ENCODE measurements at regions of chr4 and their contacts with region 1.

Region 1: DNA sequence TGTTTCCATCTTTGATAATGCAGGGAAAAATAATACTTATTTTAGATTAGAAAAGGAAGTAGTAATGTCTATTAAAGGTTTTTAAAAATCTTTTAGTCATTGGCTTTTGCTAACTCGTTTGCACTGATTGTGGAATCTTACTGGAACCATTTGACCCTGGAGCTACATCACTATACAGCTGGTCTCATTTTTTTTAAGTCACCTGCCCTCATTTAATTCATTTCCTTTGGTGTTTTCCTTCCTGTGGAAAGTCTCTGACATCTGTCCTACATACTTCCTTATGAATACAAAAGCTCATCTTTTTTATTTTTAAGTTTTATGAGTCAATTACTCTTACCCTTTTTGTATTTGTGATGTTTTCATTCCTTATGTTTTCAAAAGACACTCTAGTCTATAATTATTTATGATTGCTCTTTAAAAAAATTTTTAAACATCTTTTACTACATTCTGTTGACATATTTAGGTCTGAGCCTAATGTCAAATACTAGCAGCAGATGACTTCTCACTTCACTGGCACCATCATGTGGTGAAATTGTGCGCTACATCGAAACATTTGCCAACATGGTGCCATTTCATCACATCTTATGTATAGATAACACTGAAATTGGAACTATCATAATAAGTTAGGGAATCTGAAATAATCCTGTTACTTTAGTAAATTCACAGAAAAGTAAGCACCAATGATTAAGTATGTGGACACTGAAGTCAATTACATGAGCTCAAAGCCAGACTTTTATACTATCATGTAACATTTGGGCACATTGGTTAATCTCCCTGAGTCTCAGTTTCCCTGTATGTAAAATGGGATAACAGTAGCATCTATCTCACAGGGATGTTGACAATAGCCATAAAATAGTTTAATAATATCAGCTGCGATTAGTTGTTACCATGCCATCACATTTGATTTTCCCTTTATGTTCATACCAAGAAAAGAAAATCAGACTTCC is 9.4 kb upstream of the MMAA start:
- DNase-seq: peak; percentile 68
- ATAC-seq: peak; percentile 82
- H3K4me3 ChIP-seq: no peak overlapping the region
- H3K27ac ChIP-seq: no peak overlapping the region
- H3K4me1 ChIP-seq: no peaks in the 10 kb centered on the region
- H3K27me3 ChIP-seq: no peaks in the 10 kb centered on the region
- CTCF ChIP-seq: peak; percentile 68 to 87 (median 84)
- POLR2A ChIP-seq: no peak
- RAD21 ChIP-seq: peak; percentile 94

Region 2: GRCh38 chr4:145154573-145154972 is 455.2 kb before region 1 on chr4:
- CTCF ChIA-PET with region 1: no interaction called
- POLR2A ChIA-PET with region 1: no interaction called
- RAD21 ChIA-PET with region 1: no interaction called
- intact Hi-C with region 1: loop called (anchors 2 kb)
- DNase-seq: no peak
- ATAC-seq: peak; percentile 92
- H3K4me3 ChIP-seq: no peak overlapping the region
- H3K27ac ChIP-seq: no peak overlapping the region
- H3K4me1 ChIP-seq: no peaks in the 10 kb centered on the region
- H3K27me3 ChIP-seq: no peaks in the 10 kb centered on the region
- CTCF ChIP-seq: peak; percentile 37 to 67 (median 61); a peak in 5 of 6 replicates
- POLR2A ChIP-seq: no peak
- RAD21 ChIP-seq: peak; percentile 59

Region 3: GRCh38 chr4:145216535-145216934 is 393.2 kb before region 1 on chr4:
- CTCF ChIA-PET with region 1: interaction called, 30 read pairs
- POLR2A ChIA-PET with region 1: no interaction called
- RAD21 ChIA-PET with region 1: interaction called in 1 of 2 experiments, 4 read pairs
- intact Hi-C with region 1: loop called (anchors 1 kb)
- DNase-seq: peak; percentile 24
- ATAC-seq: peak; percentile 46; the same call in 1 of the 2 replicates
- H3K4me3 ChIP-seq: no peak overlapping the region
- H3K27ac ChIP-seq: no peak overlapping the region
- H3K4me1 ChIP-seq: no peaks in the 10 kb centered on the region
- H3K27me3 ChIP-seq: no peaks in the 10 kb centered on the region
- CTCF ChIP-seq: peak; percentile 49 to 75 (median 72); a peak in 5 of 6 replicates
- POLR2A ChIP-seq: no peak
- RAD21 ChIP-seq: peak; percentile 87

Region 4: GRCh38 chr4:145481164-145481941 is 128.4 kb before region 1 on chr4 and contains the start of gene SMAD1:
- CTCF ChIA-PET with region 1: interaction called, 3 read pairs
- POLR2A ChIA-PET with region 1: no interaction called
- RAD21 ChIA-PET with region 1: no interaction called
- intact Hi-C with region 1: loop called (anchors 5 kb)
- DNase-seq: peak; percentile 57
- ATAC-seq: peak; percentile 87
- H3K4me3 ChIP-seq: peak within 1 kb of the TSS; percentile 66 to 73
- H3K27ac ChIP-seq: peak within 1 kb of the TSS; percentile 82
- H3K4me1 ChIP-seq: peaks cover 7 to 22% of the 10 kb centered on the region in 2 experiments; a peak in 3 of 4 replicates
- H3K27me3 ChIP-seq: no peaks in the 10 kb centered on the region
- CTCF ChIP-seq: no peak
- POLR2A ChIP-seq: no peak
- RAD21 ChIP-seq: no peak; the same call in 1 of the 2 replicates
- total RNA-seq, gene SMAD1: 23.0 TPM

Measured in HCT116 (cell line).